ENCODE measurements at regions of chr10 and their contacts with region 1.

Region 1: DNA sequence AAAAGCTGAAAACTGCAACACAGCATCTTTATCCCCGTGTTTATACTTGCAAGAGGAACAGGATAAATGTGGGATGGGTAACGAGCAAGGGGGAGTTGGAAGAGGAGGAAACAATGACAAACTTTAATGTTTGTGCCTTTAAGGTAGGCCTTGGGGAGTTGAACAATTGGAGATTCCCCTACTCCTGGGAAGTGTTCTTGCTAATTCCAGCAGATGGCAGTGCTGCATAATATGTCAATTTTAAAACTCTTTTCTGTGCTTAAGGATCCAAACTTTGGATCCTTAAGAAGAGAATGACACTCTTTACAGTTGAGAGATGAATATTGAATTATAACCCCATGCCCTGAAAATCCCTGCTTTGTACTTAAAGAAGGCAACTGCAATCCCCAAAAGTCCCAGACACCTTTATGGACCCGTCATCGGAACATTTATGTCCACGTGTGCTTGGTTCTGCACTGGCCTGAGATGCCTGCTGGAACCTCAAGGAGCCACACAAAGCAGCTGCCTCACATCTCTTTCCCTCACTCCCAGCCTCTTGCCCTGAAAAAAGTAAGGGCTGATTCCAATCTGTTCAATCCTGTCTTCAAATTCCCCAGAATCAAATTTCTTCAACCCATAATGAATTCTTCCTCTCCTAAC is 12.0 kb downstream of the IFIT5 start:
- DNase-seq: peak; percentile 42 to 71 (median 63)
- H3K4me3 ChIP-seq: no peak overlapping the region
- H3K27ac ChIP-seq: no peak overlapping the region
- H3K4me1 ChIP-seq: no peaks in the 10 kb centered on the region
- H3K27me3 ChIP-seq: no peaks in the 10 kb centered on the region

Region 2: DNA sequence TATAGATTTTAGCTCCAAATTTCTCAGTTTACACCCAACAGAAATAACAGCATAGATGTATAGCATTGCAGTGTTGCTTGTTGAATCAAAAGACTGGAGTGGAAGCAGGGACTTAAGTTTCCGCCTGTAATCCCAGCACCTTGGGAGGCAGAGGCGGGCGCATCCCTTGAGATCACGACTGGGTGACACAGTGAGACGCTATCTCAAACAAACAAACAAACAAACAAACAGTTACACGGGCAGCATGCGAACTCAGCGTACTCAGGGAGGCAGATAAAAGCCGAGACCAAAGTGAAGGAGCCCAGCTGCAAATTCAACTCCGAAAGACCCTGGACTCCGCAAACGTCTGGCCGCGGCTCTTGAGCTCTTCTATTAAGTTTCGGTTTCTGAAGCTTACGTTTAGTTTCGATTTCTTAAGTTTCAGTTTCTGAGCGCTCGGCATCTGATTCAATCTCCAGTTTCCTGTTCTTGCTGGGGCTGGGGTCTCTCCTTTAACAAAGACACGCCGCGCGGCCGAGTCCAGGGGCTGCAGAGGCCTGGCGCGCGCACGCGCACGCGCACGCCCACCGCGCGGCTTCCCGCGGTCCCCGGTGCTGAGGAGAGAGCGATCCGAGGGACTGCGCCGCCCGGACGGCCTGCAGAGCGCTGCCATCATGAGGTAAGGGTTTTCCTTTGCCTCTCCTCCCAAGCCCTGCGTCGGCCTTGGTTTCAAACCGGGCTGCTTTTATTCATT is 12.0 kb before region 1 on chr10 and contains the start of gene IFIT5:
- CTCF ChIA-PET with region 1: interaction called, 10 read pairs
- POLR2A ChIA-PET with region 1: no interaction called
- DNase-seq: peak; percentile 81 to 94 (median 93)
- H3K4me3 ChIP-seq: peak within 1 kb of the TSS; percentile 80 to 99 (median 85)
- H3K27ac ChIP-seq: peak within 1 kb of the TSS; percentile 69 to 90
- H3K4me1 ChIP-seq: peaks cover 9 to 29% (median 13%) of the 10 kb centered on the region in 4 experiments
- H3K27me3 ChIP-seq: no peaks in the 10 kb centered on the region

Measured in common myeloid progenitor, CD34-positive (primary cell).